Mammary epithelial cell (primary cell): ENCODE measurements at regions of chr10 and their contacts with region 1.

Region 1: GRCh38 chr10:119103903-119104652 is at the start of gene DENND10:
- DNase-seq: peak; percentile 66
- H3K4me3 ChIP-seq: peak within 1 kb of the TSS; percentile 74 to 76 (median 74)
- H3K27ac ChIP-seq: peak within 1 kb of the TSS; percentile 43
- H3K4me1 ChIP-seq: peaks cover 24% of the 10 kb centered on the region
- H3K27me3 ChIP-seq: no peaks in the 10 kb centered on the region
- CTCF ChIP-seq: no peak
- total RNA-seq, gene DENND10: 39.9 to 61.3 TPM

Region 2: DNA sequence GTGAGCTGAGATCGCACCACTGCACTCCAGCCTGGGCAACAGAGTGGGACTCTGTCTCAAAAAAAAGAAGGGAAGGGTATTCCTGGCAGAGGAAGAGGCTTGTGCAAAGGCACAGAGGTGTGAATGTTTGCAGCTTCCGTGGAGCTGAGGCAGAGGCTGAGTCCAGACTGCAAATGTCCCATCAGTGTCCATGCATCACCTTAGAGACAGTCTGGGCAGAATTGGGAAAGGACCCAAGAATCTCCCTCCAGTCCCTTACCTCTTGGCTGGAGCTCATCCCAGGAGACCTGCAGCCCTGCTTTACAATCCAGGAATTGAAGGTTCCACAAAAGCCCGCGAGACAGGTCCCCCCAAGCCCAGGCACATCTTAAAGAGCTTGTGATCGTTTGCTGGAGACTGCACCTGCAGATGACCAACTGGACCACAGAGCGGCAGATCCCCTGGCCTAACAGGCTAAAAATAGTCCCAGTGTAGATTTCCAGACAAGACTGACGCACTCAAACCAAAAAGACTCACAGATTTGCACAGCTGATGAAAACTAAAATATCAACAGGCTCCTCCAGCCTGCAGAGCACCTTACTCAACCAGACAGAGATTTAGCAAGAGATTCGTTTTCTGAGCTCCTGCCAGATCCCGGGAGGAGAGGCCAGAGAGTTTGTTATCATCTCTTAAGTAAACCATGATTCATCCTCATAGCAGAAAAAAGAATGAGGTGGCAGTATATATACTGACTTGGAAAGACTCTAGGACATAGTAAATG is 97.4 kb before region 1 on chr10:
- CTCF ChIA-PET with region 1: no interaction called
- dilution Hi-C with region 1: loop called (anchors 5 kb)
- in situ Hi-C with region 1: no loop called
- intact Hi-C with region 1: no loop called
- DNase-seq: peak; percentile 96
- H3K4me3 ChIP-seq: no peak overlapping the region
- H3K27ac ChIP-seq: no peak overlapping the region
- H3K4me1 ChIP-seq: peaks cover 41% of the 10 kb centered on the region
- H3K27me3 ChIP-seq: no peaks in the 10 kb centered on the region
- CTCF ChIP-seq: no peak

Region 3: DNA sequence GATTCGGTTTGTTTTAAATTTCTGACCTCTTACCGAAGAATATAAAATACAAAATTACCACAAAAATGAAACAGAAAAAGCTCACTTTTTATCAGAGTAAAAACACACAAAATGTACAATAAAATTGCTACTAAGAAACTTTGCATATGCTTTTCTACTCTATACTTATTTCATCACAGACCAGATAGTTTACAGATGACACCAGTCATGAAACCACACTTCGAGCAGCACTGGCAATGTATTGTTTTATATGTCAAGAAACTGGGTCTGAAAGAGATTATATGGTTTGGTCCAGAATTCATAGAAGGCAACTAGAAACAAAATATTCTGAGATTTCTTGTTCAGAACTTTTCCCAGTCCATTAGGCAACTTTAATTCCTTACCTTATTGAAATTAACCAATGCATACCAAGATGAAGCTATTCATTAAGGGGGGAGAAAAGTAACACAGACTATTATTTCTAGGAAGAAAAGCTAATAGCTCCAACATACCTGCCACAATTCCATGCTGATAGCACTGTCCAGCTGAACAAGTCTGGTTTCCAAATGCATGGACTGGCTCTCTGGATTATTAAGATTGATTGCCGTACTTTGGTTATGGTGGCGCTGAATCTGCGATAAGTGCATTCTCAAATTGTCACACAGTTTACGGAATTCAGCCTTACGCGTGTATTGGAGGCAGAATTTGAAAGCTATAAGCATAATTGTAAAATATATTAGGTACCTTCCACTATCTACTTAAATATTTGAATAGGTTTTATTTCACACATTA is 33.5 kb before region 1 on chr10:
- CTCF ChIA-PET with region 1: no interaction called
- dilution Hi-C with region 1: no loop called
- in situ Hi-C with region 1: no loop called
- intact Hi-C with region 1: loop called (anchors 5 kb)
- DNase-seq: no peak
- H3K4me3 ChIP-seq: no peak overlapping the region
- H3K27ac ChIP-seq: no peak overlapping the region
- H3K4me1 ChIP-seq: no peaks in the 10 kb centered on the region
- H3K27me3 ChIP-seq: no peaks in the 10 kb centered on the region
- CTCF ChIP-seq: no peak

Region 4: GRCh38 chr10:119080521-119081260 is 23.4 kb before region 1 on chr10 and contains the start of gene EIF3A:
- CTCF ChIA-PET with region 1: interaction called, 3 read pairs
- dilution Hi-C with region 1: no loop called
- in situ Hi-C with region 1: no loop called
- intact Hi-C with region 1: loop called (anchors 1 kb)
- DNase-seq: peak; percentile 91
- H3K4me3 ChIP-seq: peak within 1 kb of the TSS; percentile 71 to 97 (median 85)
- H3K27ac ChIP-seq: peak within 1 kb of the TSS; percentile 93
- H3K4me1 ChIP-seq: peaks cover 8% of the 10 kb centered on the region
- H3K27me3 ChIP-seq: no peaks in the 10 kb centered on the region
- CTCF ChIP-seq: no peak
- total RNA-seq, gene EIF3A: 115 to 170 TPM

Region 5: GRCh38 chr10:119725828-119726675 is 622.0 kb after region 1 on chr10 and contains the start of gene INPP5F:
- CTCF ChIA-PET with region 1: interaction called, 13 read pairs
- dilution Hi-C with region 1: no loop called
- in situ Hi-C with region 1: no loop called
- intact Hi-C with region 1: no loop called
- DNase-seq: peak; percentile 98
- H3K4me3 ChIP-seq: peak within 1 kb of the TSS; percentile 76 to 95 (median 85)
- H3K27ac ChIP-seq: peak within 1 kb of the TSS; percentile 54
- H3K4me1 ChIP-seq: peaks cover 15% of the 10 kb centered on the region
- H3K27me3 ChIP-seq: no peaks in the 10 kb centered on the region
- CTCF ChIP-seq: peak in 1 of 2 donors; percentile 27
- total RNA-seq, gene INPP5F: 19.3 to 22.1 TPM